Prostate gland (tissue), 2 donors: ENCODE measurements at regions of chr5 and their contacts with region 1.

Region 1: DNA sequence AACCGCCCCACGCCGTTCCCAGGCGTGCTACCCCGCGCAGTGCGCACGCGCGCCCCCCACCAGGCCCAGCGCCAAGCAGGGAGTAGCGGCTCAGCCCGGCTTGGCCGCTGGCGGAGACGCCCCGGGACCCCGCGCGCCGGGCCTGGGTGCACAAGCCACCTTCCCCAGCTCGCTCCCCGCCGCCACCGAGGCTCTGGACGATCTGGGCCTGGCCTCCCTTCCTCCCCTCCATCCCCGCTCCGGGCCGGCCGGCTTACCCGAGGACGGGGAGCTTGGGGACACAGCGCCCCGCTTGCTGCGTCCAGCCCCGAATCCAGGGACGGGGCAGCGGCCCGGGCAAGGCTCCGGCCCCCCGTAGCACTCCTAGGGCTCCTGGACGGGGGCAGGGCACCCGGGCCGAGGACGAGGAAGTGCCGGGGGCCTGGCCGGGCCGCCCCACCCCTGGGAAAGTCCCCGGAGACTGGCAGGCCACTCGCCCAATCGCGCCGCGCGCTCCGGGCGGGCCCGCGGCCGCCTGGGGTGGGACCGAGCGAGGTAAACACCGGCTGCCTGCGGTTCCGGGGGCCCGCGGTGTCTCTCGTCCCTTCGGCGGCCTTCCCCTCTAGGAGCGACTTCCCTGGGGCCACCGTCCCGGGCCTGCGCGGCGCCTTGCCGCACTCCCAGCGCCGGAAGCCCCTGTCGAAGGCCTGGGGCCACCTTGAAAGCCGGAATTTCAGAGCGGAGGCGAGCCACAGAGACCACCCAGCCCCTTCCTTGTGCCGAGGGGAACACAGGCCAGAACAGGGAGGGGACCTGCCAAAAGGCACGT is at the start of gene TNIP1:
- DNase-seq: peak; percentile 95
- H3K4me3 ChIP-seq: peak within 1 kb of the TSS; percentile 59 to 77
- H3K27ac ChIP-seq: peak within 1 kb of the TSS; percentile 90 to 95
- H3K4me1 ChIP-seq: no peaks in the 10 kb centered on the region
- H3K27me3 ChIP-seq: no peaks in the 10 kb centered on the region
- CTCF ChIP-seq: peak in 1 of 4 experiments; percentile 5
- POLR2A ChIP-seq: peak; percentile 86
- total RNA-seq, gene TNIP1: 61.9 to 81.6 TPM

Region 2: GRCh38 chr5:151063142-151063949 is 17.5 kb before region 1 on chr5:
- intact Hi-C with region 1: loop called (anchors 2 kb)
- DNase-seq: no peak
- H3K4me3 ChIP-seq: no peak overlapping the region
- H3K27ac ChIP-seq: peak overlapping the region; percentile 28 to 61
- H3K4me1 ChIP-seq: no peaks in the 10 kb centered on the region
- H3K27me3 ChIP-seq: no peaks in the 10 kb centered on the region
- CTCF ChIP-seq: no peak
- POLR2A ChIP-seq: no peak